Sciatic nerve (tissue), 2 donors: ENCODE measurements at regions of chr15 and their contacts with region 1.

Region 1: DNA sequence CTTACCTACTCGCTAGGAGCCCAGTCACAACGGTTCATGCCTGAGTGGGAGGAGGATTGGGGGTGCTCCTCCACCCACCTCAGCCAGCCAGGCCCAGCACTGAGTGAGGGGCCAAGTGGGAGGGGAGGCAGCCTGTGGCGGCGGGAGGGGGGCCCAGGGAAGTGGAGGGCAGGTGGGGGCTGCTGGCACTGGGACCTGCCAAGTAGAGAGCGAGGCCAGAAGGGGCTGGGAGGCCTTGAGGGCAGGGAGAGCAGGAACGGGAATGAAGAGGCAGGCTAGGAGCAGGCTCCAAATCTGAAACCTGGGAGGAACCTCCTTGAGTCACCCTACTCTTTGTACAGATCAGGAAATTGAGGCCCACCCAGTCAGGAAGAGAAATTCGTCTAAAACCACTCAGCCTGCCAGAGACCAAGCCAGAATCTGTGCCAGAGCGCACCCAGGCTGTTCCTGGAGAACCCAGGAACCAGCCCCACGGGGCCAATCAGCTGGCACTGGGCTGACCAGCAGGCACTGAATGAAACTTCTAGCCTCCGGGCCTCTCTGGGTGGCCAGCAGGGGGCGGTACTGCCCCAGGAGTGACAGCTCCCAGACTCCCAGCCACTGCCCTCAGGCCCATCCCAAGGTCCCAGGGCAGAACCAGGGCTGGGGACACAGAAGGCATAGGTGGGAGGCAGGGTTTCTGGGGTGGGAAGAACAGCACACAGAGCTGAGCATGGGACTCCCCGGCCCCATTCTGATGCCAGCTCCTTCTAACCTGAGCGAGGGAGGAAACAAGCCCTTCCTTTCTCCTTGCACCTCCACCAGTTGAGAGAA is 14.8 kb upstream of the CYP11A1 start:
- DNase-seq: peak; percentile 93
- ATAC-seq: peak; percentile 92

Region 2: DNA sequence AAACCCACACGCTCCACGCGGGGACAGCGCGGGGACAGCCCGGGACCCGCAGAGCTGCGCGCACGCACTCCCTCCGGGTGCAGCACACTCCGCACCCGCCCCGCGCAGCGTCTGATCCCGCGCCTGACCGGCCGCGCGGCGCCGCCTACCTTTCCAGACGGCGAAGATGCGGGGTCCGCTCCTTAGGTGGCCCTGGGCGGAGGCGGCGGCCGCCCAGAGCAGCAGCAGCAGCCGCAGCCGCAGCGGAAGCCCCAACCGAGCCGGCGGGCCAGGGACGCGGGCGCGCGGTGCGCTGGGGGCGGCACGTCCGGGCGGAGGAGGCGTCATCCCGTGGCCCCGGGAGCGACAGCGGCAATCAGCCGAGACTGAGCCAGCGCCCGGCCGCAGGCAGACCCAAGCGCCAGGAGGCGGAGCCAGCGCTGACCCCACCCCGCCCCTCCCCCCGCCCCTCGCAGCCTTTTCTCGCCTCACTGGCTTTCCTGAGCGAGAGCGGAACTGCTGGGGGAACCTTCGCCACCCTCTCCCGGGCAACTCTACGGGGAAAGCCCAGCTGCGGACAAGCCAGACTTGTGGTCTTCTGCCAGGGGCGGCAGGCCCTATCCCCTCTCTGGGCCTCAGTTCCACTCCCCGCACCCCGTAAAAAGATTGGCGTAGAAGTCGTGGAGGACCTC is 51.5 kb after region 1 on chr15 and contains the start of gene SEMA7A:
- intact Hi-C with region 1: loop called (anchors 2 kb)
- DNase-seq: peak; percentile 91
- ATAC-seq: peak; percentile 90
- total RNA-seq, gene SEMA7A: 30.9 TPM